Common myeloid progenitor, CD34-positive (primary cell): ENCODE measurements at regions of chr5 and their contacts with region 1.

Region 1: GRCh38 chr5:57175551-57176309 is 1.9 kb downstream of the GPBP1 start:
- DNase-seq: peak in 2 of 3 donors; percentile 36 to 42
- H3K4me3 ChIP-seq: peak overlapping the region in 6 of 7 experiments; percentile 78 to 100 (median 98)
- H3K27ac ChIP-seq: peak overlapping the region; percentile 99
- H3K4me1 ChIP-seq: peaks cover 36 to 70% (median 51%) of the 10 kb centered on the region in 4 experiments
- H3K27me3 ChIP-seq: no peaks in the 10 kb centered on the region

Region 2: GRCh38 chr5:57186194-57186593 is 10.5 kb after region 1 on chr5:
- CTCF ChIA-PET with region 1: interaction called, 11 read pairs
- POLR2A ChIA-PET with region 1: no interaction called
- DNase-seq: no peak
- H3K4me3 ChIP-seq: no peak overlapping the region
- H3K27ac ChIP-seq: no peak overlapping the region
- H3K4me1 ChIP-seq: peaks cover 4 to 23% (median 13%) of the 10 kb centered on the region in 4 experiments
- H3K27me3 ChIP-seq: no peaks in the 10 kb centered on the region